Activated B cell treated with CpG ODN at 0.5 μM for 24 hours (primary cell): ENCODE measurements at regions of chr7 and their contacts with region 1.

Region 1: DNA sequence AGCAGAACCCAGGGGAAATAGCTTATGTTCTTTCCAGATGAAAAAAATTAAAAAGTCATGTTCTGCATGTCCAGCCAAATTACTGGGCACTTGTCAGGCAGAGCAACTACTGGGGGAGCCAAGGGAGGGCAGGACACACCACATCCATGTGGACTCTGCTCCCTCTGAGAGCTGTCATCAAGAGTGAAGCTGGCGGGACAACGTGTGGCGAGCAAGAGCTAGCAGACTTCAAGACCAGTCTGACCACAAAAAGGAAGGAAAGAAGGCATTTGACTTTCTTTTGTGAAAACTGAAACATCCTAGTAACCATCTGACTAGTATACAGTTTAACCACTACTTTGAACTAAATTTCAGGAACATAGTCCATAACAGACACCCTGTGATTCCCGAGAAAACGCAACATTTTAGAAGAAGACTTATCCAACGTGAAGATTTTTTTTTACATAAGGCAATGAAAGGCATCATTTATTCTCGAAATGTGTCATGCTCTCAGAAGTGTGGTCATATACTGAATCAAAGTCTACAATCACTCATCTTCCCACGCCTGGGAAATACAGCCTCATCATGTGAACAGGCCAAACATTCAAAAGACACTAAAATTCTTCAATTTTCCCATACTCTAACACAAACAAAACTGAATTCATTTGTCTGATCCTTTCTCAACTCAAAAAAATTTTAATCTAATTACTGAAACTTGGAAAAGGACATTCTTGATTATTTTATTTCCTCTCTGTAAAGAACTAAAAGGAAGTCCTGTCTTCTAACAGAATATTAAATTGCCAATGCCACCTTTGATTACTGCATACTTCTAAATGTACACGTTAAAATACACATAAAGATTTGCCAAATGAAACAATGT is 15.5 kb downstream of the CYTH3 start:
- DNase-seq: no peak
- ATAC-seq: peak; percentile 49
- H3K4me3 Mint-ChIP-seq: peak overlapping the region; percentile 24
- H3K27ac Mint-ChIP-seq: peak overlapping the region; percentile 57
- H3K4me1 Mint-ChIP-seq: peaks cover 41% of the 10 kb centered on the region
- H3K27me3 Mint-ChIP-seq: peaks cover 6% of the 10 kb centered on the region
- CTCF ChIP-seq: no peak

Region 2: GRCh38 chr7:5557920-5558401 is 698.9 kb before region 1 on chr7:
- CTCF ChIA-PET with region 1: no interaction called
- POLR2A ChIA-PET with region 1: no interaction called
- intact Hi-C with region 1: no loop called
- DNase-seq: peak; percentile 45
- ATAC-seq: peak; percentile 13
- H3K4me3 Mint-ChIP-seq: peak overlapping the region; percentile 87
- H3K27ac Mint-ChIP-seq: peak overlapping the region; percentile 93
- H3K4me1 Mint-ChIP-seq: peaks cover 49% of the 10 kb centered on the region
- H3K27me3 Mint-ChIP-seq: no peaks in the 10 kb centered on the region
- CTCF ChIP-seq: no peak

Region 3: DNA sequence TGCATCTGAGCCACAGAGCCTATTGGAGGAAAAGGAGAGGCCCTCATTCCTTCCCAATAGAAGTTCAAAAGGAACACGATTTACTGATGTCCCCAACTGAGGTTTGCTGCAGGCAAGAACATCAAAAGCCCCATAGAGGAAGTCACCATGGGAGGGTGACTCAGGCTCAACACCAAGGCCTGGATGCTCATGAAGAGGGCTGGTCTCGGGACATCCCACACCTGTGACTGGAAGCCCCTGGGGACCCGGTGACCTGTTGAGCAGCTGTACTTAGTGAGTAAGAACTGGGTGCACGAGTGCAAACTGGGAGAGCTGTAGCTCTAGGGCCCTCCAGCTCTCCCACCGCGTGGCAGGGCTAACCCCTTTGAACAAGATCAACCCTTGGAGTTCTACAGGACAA is 22.5 kb before region 1 on chr7:
- CTCF ChIA-PET with region 1: no interaction called
- POLR2A ChIA-PET with region 1: interaction called, 3 read pairs
- intact Hi-C with region 1: loop called (anchors 2 kb)
- DNase-seq: peak; percentile 21
- ATAC-seq: peak; percentile 93
- H3K4me3 Mint-ChIP-seq: no peak overlapping the region
- H3K27ac Mint-ChIP-seq: peak overlapping the region; percentile 30
- H3K4me1 Mint-ChIP-seq: peaks cover 35% of the 10 kb centered on the region
- H3K27me3 Mint-ChIP-seq: peaks cover 4% of the 10 kb centered on the region
- CTCF ChIP-seq: no peak

Region 4: GRCh38 chr7:7449055-7449454 is 1192.1 kb after region 1 on chr7:
- CTCF ChIA-PET with region 1: no interaction called
- POLR2A ChIA-PET with region 1: no interaction called
- intact Hi-C with region 1: no loop called
- DNase-seq: no peak
- ATAC-seq: no peak
- H3K4me3 Mint-ChIP-seq: no peak overlapping the region
- H3K27ac Mint-ChIP-seq: no peak overlapping the region
- H3K4me1 Mint-ChIP-seq: no peaks in the 10 kb centered on the region
- H3K27me3 Mint-ChIP-seq: no peaks in the 10 kb centered on the region
- CTCF ChIP-seq: no peak